ENCODE measurements at regions of chr7 and their contacts with region 1.

Region 1: DNA sequence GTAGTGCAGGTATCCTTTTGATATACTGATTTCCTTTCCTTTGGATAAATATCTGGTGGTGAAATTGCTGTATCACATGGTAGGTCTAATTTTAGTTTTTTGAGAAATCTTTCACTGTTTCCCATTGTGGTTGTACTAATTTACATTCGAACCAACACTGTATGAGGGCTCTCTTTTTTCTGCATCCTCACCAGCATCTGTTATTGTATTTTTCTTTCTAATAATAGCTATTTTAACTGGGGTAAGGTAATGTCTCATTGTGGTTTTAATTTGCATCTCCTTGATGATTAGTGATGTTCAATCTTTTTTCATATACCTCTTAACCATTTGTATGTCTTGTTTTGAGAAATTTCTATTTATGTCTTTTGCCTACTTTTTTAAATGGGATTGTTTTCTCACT is 335.4 kb upstream of the MTPN start:
- DNase-seq: no peak
- ATAC-seq: no peak
- H3K4me3 ChIP-seq: no peak overlapping the region
- H3K4me3 Mint-ChIP-seq: no peak overlapping the region
- H3K27ac ChIP-seq: no peak overlapping the region
- H3K27ac Mint-ChIP-seq: no peak overlapping the region
- H3K4me1 ChIP-seq: no peaks in the 10 kb centered on the region
- H3K4me1 Mint-ChIP-seq: no peaks in the 10 kb centered on the region
- H3K27me3 ChIP-seq: no peaks in the 10 kb centered on the region
- H3K27me3 Mint-ChIP-seq: no peaks in the 10 kb centered on the region

Region 2: DNA sequence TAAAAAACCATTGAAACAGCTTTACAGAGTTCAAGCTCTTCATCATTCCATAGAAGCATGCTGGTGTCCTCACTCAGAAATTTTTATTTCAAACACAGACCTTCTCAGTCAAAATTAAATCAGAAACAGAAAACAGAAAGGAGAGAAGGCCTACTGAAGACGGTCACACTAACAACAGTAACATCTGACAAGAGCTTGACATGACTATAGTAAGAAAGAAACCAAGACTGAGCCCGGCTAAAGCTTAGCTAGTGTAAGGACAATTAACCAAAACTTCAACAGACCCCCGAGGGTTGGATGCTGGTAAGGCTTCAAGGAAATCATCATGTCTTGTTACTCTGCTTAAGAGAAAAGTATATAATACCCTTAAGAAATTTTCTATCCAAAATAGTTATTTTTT is 374.0 kb before region 1 on chr7:
- CTCF ChIA-PET with region 1: no interaction called
- POLR2A ChIA-PET with region 1: no interaction called
- DNase-seq: no peak
- ATAC-seq: no peak
- H3K4me3 ChIP-seq: no peak overlapping the region
- H3K4me3 Mint-ChIP-seq: no peak overlapping the region
- H3K27ac ChIP-seq: no peak overlapping the region
- H3K27ac Mint-ChIP-seq: peak overlapping the region; percentile 48 to 79
- H3K4me1 ChIP-seq: peaks cover 7 to 9% of the 10 kb centered on the region in 2 experiments
- H3K4me1 Mint-ChIP-seq: peaks cover 75 to 88% (median 87%) of the 10 kb centered on the region in 3 donors
- H3K27me3 ChIP-seq: no peaks in the 10 kb centered on the region
- H3K27me3 Mint-ChIP-seq: no peaks in the 10 kb centered on the region

Region 3: GRCh38 chr7:136339464-136339863 is 26.9 kb after region 1 on chr7:
- CTCF ChIA-PET with region 1: no interaction called
- POLR2A ChIA-PET with region 1: no interaction called
- DNase-seq: no peak
- ATAC-seq: no peak
- H3K4me3 ChIP-seq: no peak overlapping the region
- H3K4me3 Mint-ChIP-seq: no peak overlapping the region
- H3K27ac ChIP-seq: no peak overlapping the region
- H3K27ac Mint-ChIP-seq: no peak overlapping the region
- H3K4me1 ChIP-seq: no peaks in the 10 kb centered on the region
- H3K4me1 Mint-ChIP-seq: no peaks in the 10 kb centered on the region
- H3K27me3 ChIP-seq: no peaks in the 10 kb centered on the region
- H3K27me3 Mint-ChIP-seq: no peaks in the 10 kb centered on the region

Region 4: GRCh38 chr7:137343281-137343841 is 1030.8 kb after region 1 on chr7 and contains the start of gene PTN:
- CTCF ChIA-PET with region 1: no interaction called
- POLR2A ChIA-PET with region 1: interaction called in 1 of 2 experiments, 16 read pairs
- DNase-seq: no peak
- ATAC-seq: no peak
- H3K4me3 ChIP-seq: no peak within 1 kb of the TSS
- H3K4me3 Mint-ChIP-seq: no peak within 1 kb of the TSS
- H3K27ac ChIP-seq: no peak within 1 kb of the TSS
- H3K27ac Mint-ChIP-seq: no peak within 1 kb of the TSS
- H3K4me1 ChIP-seq: no peaks in the 10 kb centered on the region
- H3K4me1 Mint-ChIP-seq: peaks cover 0 to 6% (median 0%) of the 10 kb centered on the region in 3 donors
- H3K27me3 ChIP-seq: peaks cover 0 to 5% of the 10 kb centered on the region in 2 experiments
- H3K27me3 Mint-ChIP-seq: peaks cover 5 to 9% of the 10 kb centered on the region in 2 donors
- total RNA-seq, gene PTN: 0.16 TPM in 1 of 5 donors, not detected in the others